ENCODE measurements at regions of chr3 and their contacts with region 1.

Region 1: DNA sequence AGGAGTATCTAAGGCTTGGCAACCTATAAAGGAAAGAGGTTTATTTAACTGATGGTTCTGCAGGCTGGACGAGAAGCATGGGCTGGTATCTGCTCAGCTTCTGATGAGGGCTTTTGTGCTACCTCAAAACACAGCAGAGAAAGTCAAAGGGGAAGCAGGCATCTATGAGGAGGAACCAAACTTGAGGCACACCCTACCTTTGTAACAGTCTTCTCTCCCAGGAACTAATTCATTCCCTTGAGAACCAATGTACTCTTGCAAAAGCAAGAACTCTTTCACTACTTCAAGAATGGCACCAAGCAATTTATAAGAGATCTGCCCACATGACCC is 109.0 kb downstream of the CGGBP1 start:
- DNase-seq: no peak
- ATAC-seq: no peak
- H3K4me3 ChIP-seq: no peak overlapping the region
- H3K27ac ChIP-seq: no peak overlapping the region
- H3K4me1 ChIP-seq: no peaks in the 10 kb centered on the region
- H3K27me3 ChIP-seq: no peaks in the 10 kb centered on the region
- CTCF ChIP-seq: no peak
- POLR2A ChIP-seq: no peak
- RAD21 ChIP-seq: no peak

Region 2: DNA sequence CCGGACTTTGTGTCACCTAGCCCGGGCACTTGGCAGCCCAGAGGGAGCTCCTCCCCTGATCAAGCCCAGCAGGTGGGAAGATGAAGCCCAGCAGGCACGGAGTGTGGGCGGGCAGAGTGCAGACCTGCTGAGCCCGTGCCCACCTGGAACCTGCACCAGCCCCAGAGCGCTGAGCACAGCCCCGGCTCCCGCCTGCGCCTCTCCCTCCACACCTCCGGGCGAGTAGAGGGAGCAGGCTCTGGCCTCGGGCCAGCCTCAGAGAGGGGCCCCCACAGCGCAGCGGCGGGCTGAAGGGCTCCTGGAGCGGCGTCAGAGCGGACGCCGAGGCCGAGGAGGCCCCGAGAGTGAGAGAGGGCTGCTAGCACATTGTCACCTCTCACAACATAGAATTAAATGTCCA is 1216.6 kb before region 1 on chr3:
- CTCF ChIA-PET with region 1: no interaction called
- POLR2A ChIA-PET with region 1: no interaction called
- dilution Hi-C with region 1: no loop called
- in situ Hi-C with region 1: loop called (anchors 25 kb)
- intact Hi-C with region 1: no loop called
- DNase-seq: no peak
- ATAC-seq: no peak
- H3K4me3 ChIP-seq: no peak overlapping the region
- H3K27ac ChIP-seq: no peak overlapping the region
- H3K4me1 ChIP-seq: no peaks in the 10 kb centered on the region
- H3K27me3 ChIP-seq: no peaks in the 10 kb centered on the region
- CTCF ChIP-seq: no peak
- POLR2A ChIP-seq: no peak
- RAD21 ChIP-seq: no peak

Region 3: DNA sequence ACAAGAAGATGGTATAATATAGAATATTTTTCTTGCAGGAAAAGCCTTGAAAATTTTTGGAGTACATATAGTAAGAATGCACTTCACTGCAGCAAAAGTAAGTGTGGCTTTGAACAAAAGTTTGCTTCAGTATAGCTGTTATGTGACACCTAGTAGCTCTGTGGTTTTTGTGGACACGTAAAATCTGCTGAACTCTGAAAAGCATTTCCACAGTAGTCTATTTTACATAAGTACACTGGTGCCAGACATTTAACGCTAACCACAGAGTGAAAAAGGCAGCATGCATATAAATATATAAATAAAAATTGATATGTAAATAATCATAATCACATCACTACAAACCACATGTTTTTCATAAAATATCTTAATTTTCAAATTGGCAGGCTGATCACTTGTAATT is 69.2 kb after region 1 on chr3:
- CTCF ChIA-PET with region 1: no interaction called
- POLR2A ChIA-PET with region 1: no interaction called
- dilution Hi-C with region 1: no loop called
- in situ Hi-C with region 1: no loop called
- intact Hi-C with region 1: no loop called
- DNase-seq: no peak
- ATAC-seq: no peak
- H3K4me3 ChIP-seq: no peak overlapping the region
- H3K27ac ChIP-seq: no peak overlapping the region
- H3K4me1 ChIP-seq: no peaks in the 10 kb centered on the region
- H3K27me3 ChIP-seq: no peaks in the 10 kb centered on the region
- CTCF ChIP-seq: no peak
- POLR2A ChIP-seq: no peak
- RAD21 ChIP-seq: no peak

Region 4: DNA sequence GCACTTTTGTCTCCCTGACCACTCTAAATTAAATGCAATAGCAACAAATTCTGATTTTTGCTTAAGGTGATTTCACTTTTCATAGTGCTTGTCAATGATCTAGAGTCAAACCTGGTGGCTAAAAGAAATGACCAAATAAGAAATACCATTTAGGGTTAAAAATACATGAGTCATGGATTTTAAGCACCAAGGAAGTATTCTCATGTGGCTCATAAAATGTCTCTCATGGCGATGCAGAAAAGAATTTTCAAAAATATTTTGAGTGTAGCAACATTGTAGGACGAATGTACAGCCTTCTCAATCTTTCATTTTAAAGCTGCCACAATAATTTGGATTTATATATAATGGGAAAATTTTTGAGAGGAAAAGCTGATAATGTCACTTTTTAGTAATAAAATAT is 1351.1 kb after region 1 on chr3:
- CTCF ChIA-PET with region 1: no interaction called
- POLR2A ChIA-PET with region 1: no interaction called
- dilution Hi-C with region 1: no loop called
- in situ Hi-C with region 1: no loop called
- intact Hi-C with region 1: no loop called
- DNase-seq: no peak
- ATAC-seq: no peak
- H3K4me3 ChIP-seq: no peak overlapping the region
- H3K27ac ChIP-seq: no peak overlapping the region
- H3K4me1 ChIP-seq: no peaks in the 10 kb centered on the region
- H3K27me3 ChIP-seq: no peaks in the 10 kb centered on the region
- CTCF ChIP-seq: no peak
- POLR2A ChIP-seq: no peak
- RAD21 ChIP-seq: no peak

Measured in IMR-90 (cell line).